Heart right ventricle (tissue), 16 donors: ENCODE measurements at regions of chr16 and their contacts with region 1.

Region 1: GRCh38 chr16:8878521-8878911 is 3.6 kb upstream of the LITAFD start:
- DNase-seq: no peak
- ATAC-seq: peak in 1 of 8 donors; percentile 21
- H3K4me3 ChIP-seq: no peak overlapping the region
- H3K27ac ChIP-seq: no peak overlapping the region
- H3K4me1 ChIP-seq: peaks cover 0 to 5% (median 0%) of the 10 kb centered on the region in 9 donors
- H3K27me3 ChIP-seq: peaks cover 0 to 12% (median 0%) of the 10 kb centered on the region in 7 donors
- CTCF ChIP-seq: no peak

Region 2: GRCh38 chr16:8458481-8459046 is 420.0 kb before region 1 on chr16:
- intact Hi-C with region 1: no loop called
- DNase-seq: no peak
- ATAC-seq: no peak
- H3K4me3 ChIP-seq: no peak overlapping the region
- H3K27ac ChIP-seq: no peak overlapping the region
- H3K4me1 ChIP-seq: no peaks in the 10 kb centered on the region
- H3K27me3 ChIP-seq: peaks cover 0 to 12% (median 4%) of the 10 kb centered on the region in 7 donors
- CTCF ChIP-seq: no peak

Region 3: GRCh38 chr16:8567750-8568617 is 310.5 kb before region 1 on chr16:
- intact Hi-C with region 1: loop called in 9 of 10 experiments (anchors 2 to 10 kb)
- DNase-seq: peak; percentile 40 to 70
- ATAC-seq: peak; percentile 65 to 84 (median 74)
- H3K4me3 ChIP-seq: no peak overlapping the region
- H3K27ac ChIP-seq: no peak overlapping the region
- H3K4me1 ChIP-seq: peaks cover 0 to 20% (median 0%) of the 10 kb centered on the region in 9 donors
- H3K27me3 ChIP-seq: peaks cover 0 to 18% (median 10%) of the 10 kb centered on the region in 7 donors
- CTCF ChIP-seq: peak; percentile 93 to 98 (median 97)

Region 4: GRCh38 chr16:8655184-8655717 is 223.3 kb before region 1 on chr16:
- intact Hi-C with region 1: loop called in 9 of 10 experiments (anchors 2 to 5 kb)
- DNase-seq: no peak
- ATAC-seq: peak in 2 of 8 donors; percentile 28 to 37
- H3K4me3 ChIP-seq: no peak overlapping the region
- H3K27ac ChIP-seq: no peak overlapping the region
- H3K4me1 ChIP-seq: no peaks in the 10 kb centered on the region
- H3K27me3 ChIP-seq: no peaks in the 10 kb centered on the region
- CTCF ChIP-seq: peak in 3 of 9 donors; percentile 22 to 60 (median 29)

Region 5: DNA sequence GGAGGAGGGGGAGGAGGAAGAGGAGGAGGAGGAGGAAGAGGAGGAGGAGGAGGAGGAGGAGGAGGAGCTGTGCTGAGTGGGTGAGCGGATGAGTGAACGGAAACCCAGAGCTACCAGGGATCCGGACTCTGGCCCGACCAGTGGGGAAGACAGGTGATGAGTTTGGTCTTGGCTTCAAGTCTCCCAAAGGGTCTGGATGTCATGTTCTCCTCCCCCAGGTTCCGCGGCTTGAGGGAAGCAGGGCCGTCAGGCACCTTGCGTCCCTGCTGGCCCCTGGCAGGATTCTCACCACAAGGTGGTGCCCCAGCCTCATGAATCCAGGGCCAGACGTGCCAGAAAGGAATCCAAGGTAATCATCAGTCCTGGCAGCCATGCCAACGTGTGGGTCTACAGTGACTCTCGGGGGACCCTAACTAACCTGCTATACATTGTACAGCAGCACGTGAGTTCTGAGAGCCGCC is 217.6 kb before region 1 on chr16:
- intact Hi-C with region 1: loop called (anchors 1 to 5 kb)
- DNase-seq: peak; percentile 24 to 40
- ATAC-seq: peak; percentile 49 to 90 (median 84)
- H3K4me3 ChIP-seq: no peak overlapping the region
- H3K27ac ChIP-seq: no peak overlapping the region
- H3K4me1 ChIP-seq: no peaks in the 10 kb centered on the region
- H3K27me3 ChIP-seq: no peaks in the 10 kb centered on the region
- CTCF ChIP-seq: peak in 8 of 9 donors; percentile 25 to 71 (median 64)

Region 6: GRCh38 chr16:8674413-8675022 is 204.0 kb before region 1 on chr16 and contains the start of gene ABAT:
- intact Hi-C with region 1: loop called in 1 of 10 experiments (anchors 5 kb)
- DNase-seq: peak; percentile 88 to 92
- ATAC-seq: peak; percentile 100
- H3K4me3 ChIP-seq: peak within 1 kb of the TSS; percentile 40 to 84 (median 72)
- H3K27ac ChIP-seq: peak within 1 kb of the TSS in 4 of 10 donors; percentile 10 to 57 (median 38)
- H3K4me1 ChIP-seq: peaks cover 3 to 15% (median 10%) of the 10 kb centered on the region in 9 donors
- H3K27me3 ChIP-seq: no peaks in the 10 kb centered on the region
- CTCF ChIP-seq: no peak
- total RNA-seq, gene ABAT: 3.7 to 35.9 (median 17.7) TPM

Region 7: DNA sequence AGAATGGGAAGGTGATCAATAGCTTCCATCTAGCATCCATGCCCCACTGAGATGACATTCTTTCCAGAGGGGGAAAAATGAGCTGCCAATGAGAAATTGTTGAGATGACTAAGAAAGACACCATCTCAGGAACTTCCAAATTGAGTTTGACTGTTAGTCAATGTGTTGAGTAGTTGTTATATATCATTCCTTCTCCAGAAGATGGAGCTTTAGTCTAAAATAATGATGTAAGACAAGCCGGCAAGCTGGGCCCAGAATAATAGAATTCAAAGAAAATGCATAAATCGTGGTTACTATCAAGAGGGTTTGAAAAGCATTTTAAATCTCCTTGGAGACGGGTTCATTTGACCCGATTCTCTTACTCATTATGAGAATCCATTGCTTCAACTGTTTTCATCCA is 1436.3 kb after region 1 on chr16:
- intact Hi-C with region 1: no loop called
- DNase-seq: no peak
- ATAC-seq: peak in 2 of 8 donors; percentile 39 to 55
- H3K4me3 ChIP-seq: no peak overlapping the region
- H3K27ac ChIP-seq: no peak overlapping the region
- H3K4me1 ChIP-seq: no peaks in the 10 kb centered on the region
- H3K27me3 ChIP-seq: no peaks in the 10 kb centered on the region
- CTCF ChIP-seq: peak in 6 of 9 donors; percentile 32 to 59 (median 52)